CD4-positive, alpha-beta memory T cell (primary cell): ENCODE measurements at regions of chr18 and their contacts with region 1.

Region 1: GRCh38 chr18:33577685-33578517 is at the start of gene ASXL3:
- DNase-seq: no peak
- H3K4me3 ChIP-seq: no peak within 1 kb of the TSS
- H3K4me3 Mint-ChIP-seq: peak within 1 kb of the TSS; percentile 49 to 84 (median 68)
- H3K27ac ChIP-seq: no peak within 1 kb of the TSS
- H3K27ac Mint-ChIP-seq: peak within 1 kb of the TSS in 1 of 7 donors; percentile 49
- H3K4me1 ChIP-seq: no peaks in the 10 kb centered on the region
- H3K4me1 Mint-ChIP-seq: peaks cover 3 to 6% (median 5%) of the 10 kb centered on the region in 4 donors
- H3K27me3 ChIP-seq: no peaks in the 10 kb centered on the region
- H3K27me3 Mint-ChIP-seq: peaks cover 5 to 6% of the 10 kb centered on the region in 2 donors
- total RNA-seq, gene ASXL3: not detected

Region 2: DNA sequence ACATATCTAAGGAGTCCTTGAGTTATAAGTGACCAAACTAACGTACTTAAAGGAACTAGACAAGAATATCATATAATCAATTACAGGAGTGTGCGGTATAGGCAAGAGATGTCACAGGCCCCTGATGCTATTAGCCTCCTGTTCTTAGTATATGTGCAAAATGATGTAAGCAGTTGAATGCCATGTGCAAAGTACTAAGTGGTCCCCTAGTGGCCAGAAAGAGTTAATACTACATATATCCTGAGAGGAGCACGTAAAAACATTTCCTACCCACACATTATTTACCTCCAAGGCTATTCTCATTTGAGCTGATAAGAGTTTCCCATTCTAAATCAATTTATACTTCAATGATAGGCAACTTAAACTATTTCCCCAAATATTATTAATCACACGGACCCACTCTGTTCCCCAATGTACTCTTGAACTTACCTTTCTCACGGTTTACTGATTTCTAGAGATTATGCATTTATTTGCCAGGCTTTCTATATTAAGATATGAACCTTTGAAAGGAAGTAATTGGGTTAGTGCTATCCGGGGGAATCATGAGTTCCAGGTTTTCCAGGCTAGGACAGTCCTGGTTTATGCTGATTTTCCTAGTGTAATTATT is 647.1 kb before region 1 on chr18:
- CTCF ChIA-PET with region 1: no interaction called
- POLR2A ChIA-PET with region 1: no interaction called
- intact Hi-C with region 1: no loop called
- DNase-seq: no peak
- H3K4me3 ChIP-seq: no peak overlapping the region
- H3K4me3 Mint-ChIP-seq: no peak overlapping the region
- H3K27ac ChIP-seq: no peak overlapping the region
- H3K27ac Mint-ChIP-seq: no peak overlapping the region
- H3K4me1 ChIP-seq: no peaks in the 10 kb centered on the region
- H3K4me1 Mint-ChIP-seq: no peaks in the 10 kb centered on the region
- H3K27me3 ChIP-seq: no peaks in the 10 kb centered on the region
- H3K27me3 Mint-ChIP-seq: no peaks in the 10 kb centered on the region

Region 3: GRCh38 chr18:33560686-33561370 is 17.1 kb before region 1 on chr18:
- CTCF ChIA-PET with region 1: no interaction called
- POLR2A ChIA-PET with region 1: no interaction called
- intact Hi-C with region 1: no loop called
- DNase-seq: no peak
- H3K4me3 ChIP-seq: no peak overlapping the region
- H3K4me3 Mint-ChIP-seq: no peak overlapping the region
- H3K27ac ChIP-seq: no peak overlapping the region
- H3K27ac Mint-ChIP-seq: no peak overlapping the region
- H3K4me1 ChIP-seq: no peaks in the 10 kb centered on the region
- H3K4me1 Mint-ChIP-seq: no peaks in the 10 kb centered on the region
- H3K27me3 ChIP-seq: no peaks in the 10 kb centered on the region
- H3K27me3 Mint-ChIP-seq: no peaks in the 10 kb centered on the region

Region 4: GRCh38 chr18:33644494-33644893 is 66.6 kb after region 1 on chr18:
- CTCF ChIA-PET with region 1: no interaction called
- POLR2A ChIA-PET with region 1: no interaction called
- intact Hi-C with region 1: loop called (anchors 10 kb)
- DNase-seq: no peak
- H3K4me3 ChIP-seq: no peak overlapping the region
- H3K4me3 Mint-ChIP-seq: no peak overlapping the region
- H3K27ac ChIP-seq: no peak overlapping the region
- H3K27ac Mint-ChIP-seq: no peak overlapping the region
- H3K4me1 ChIP-seq: no peaks in the 10 kb centered on the region
- H3K4me1 Mint-ChIP-seq: no peaks in the 10 kb centered on the region
- H3K27me3 ChIP-seq: no peaks in the 10 kb centered on the region
- H3K27me3 Mint-ChIP-seq: no peaks in the 10 kb centered on the region